ENCODE measurements at regions of chr19 and their contacts with region 1.

Region 1: DNA sequence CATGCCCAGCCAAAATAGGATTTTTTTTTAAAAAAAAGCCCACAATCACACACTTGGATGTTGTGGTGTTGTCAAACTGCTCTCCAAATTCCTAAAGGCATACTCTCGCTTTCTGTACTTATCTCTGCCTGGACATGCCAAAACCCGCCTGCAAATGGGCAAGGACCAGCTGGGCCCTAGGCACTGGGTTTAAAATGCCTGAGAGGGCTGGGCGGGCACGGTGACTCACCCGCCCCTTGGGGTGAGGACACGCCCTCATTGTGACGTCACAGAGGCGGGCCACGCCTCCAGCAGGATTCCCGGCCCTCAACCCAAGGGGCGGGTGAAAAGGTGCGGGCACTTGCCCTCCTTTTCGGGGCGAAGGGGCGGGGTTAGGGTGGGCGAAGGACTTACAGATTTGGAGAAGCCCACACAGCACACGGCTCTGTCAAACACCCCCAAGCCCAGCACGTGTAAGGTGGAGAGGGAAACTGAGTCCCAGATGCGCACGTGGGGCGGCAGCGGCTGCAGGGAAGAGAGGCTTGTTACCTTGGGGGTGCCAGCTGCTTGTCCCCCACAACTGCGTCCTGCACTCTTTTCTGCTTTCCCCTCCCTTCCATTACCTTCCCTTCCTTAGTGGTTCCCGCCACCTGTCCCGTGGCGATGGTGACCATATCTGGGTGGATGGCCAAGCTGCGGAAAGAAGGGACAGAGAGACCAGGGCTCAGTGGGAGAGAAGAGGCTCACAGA is 6.6 kb downstream of the EML2 start:
- DNase-seq: peak; percentile 75
- H3K4me3 Mint-ChIP-seq: no peak overlapping the region
- H3K27ac Mint-ChIP-seq: peak overlapping the region; percentile 68
- H3K4me1 Mint-ChIP-seq: peaks cover 24% of the 10 kb centered on the region
- H3K27me3 Mint-ChIP-seq: no peaks in the 10 kb centered on the region

Region 2: GRCh38 chr19:45419396-45419795 is 213.2 kb before region 1 on chr19:
- CTCF ChIA-PET with region 1: no interaction called
- POLR2A ChIA-PET with region 1: no interaction called
- intact Hi-C with region 1: no loop called
- DNase-seq: no peak
- H3K4me3 Mint-ChIP-seq: no peak overlapping the region
- H3K27ac Mint-ChIP-seq: peak overlapping the region; percentile 34
- H3K4me1 Mint-ChIP-seq: peaks cover 35% of the 10 kb centered on the region
- H3K27me3 Mint-ChIP-seq: no peaks in the 10 kb centered on the region

Region 3: DNA sequence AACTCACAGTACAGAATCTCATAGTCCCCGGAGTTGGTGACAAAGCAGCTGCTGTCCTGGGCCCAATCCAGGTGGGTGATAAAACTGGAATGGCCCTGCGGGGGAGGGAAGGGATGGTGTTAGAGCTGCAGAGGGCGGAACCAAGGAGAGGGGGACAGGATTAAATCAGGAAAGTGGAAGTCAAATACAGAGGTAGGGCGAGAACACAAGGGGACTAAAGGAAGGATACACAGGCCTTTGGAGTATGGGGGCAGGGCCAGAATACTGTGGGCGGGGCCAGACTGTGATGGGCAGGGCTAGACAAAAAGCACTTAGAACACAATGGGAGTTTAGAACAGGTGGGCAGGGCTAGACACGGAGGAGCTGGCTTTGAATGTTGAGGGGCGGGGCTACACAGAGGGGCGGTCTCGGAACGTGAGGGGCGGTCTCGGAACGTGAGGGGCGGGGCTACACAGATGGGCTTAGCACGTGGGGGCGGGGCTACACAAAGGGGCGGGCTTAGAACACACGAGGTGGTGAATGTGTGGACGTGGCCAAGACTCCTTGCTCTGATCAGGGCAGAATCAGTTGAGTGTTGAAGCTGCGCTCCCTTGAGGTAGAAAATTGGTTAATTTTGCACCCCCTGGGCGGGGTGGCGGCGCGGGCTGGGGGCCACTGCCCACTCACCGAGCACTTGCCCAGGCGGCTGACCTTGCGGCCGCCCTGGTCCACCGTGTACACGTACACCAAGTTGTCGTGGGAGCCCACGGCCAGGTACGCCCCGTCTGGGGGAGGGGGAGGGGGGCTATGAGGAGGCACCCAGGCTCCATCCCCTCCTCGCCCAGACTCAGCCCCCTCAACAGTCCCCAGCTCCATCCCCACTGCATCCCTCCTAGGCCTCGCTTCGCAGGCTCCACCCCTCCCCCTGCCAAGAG is 16.6 kb before region 1 on chr19:
- CTCF ChIA-PET with region 1: no interaction called
- POLR2A ChIA-PET with region 1: interaction called, 9 read pairs
- intact Hi-C with region 1: loop called (anchors 1 kb)
- DNase-seq: peak; percentile 94
- H3K4me3 Mint-ChIP-seq: no peak overlapping the region
- H3K27ac Mint-ChIP-seq: peak overlapping the region; percentile 67
- H3K4me1 Mint-ChIP-seq: peaks cover 28% of the 10 kb centered on the region
- H3K27me3 Mint-ChIP-seq: no peaks in the 10 kb centered on the region